Heart right ventricle (tissue), 16 donors: ENCODE measurements at regions of chr15 and their contacts with region 1.

Region 1: GRCh38 chr15:58331903-58332675 is 99.7 kb upstream of the LIPC start:
- DNase-seq: peak; percentile 90 to 96
- ATAC-seq: peak; percentile 96 to 98 (median 98)
- H3K4me3 ChIP-seq: peak overlapping the region in 3 of 10 donors; percentile 1 to 8 (median 1)
- H3K27ac ChIP-seq: peak overlapping the region; percentile 79 to 95 (median 88)
- H3K4me1 ChIP-seq: peaks cover 18 to 47% (median 38%) of the 10 kb centered on the region in 9 donors
- H3K27me3 ChIP-seq: no peaks in the 10 kb centered on the region
- CTCF ChIP-seq: no peak

Region 2: DNA sequence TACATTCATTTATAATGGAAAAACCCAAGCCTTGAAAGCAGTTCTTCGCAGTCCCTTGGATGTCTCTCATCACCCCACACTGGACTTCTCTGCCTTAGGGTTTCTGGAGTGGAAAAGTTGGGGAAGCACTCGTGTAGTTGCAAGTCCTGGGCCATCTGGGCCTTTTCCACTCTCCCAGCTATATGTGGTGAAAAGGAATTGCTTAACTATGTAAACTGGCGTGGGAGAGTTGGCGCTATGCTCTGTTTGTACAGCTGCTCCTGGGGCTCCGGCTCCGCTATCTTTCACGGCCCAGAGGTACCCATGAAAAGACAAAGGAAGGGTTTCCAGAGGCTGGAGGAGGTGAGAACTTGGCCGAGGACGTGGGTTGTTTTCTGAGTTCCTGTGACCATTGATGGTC is 821.4 kb before region 1 on chr15:
- intact Hi-C with region 1: no loop called
- DNase-seq: peak; percentile 48 to 76
- ATAC-seq: peak; percentile 63 to 89 (median 76)
- H3K4me3 ChIP-seq: no peak overlapping the region
- H3K27ac ChIP-seq: peak overlapping the region in 6 of 10 donors; percentile 50 to 74 (median 60)
- H3K4me1 ChIP-seq: peaks cover 2 to 55% (median 31%) of the 10 kb centered on the region in 9 donors
- H3K27me3 ChIP-seq: no peaks in the 10 kb centered on the region
- CTCF ChIP-seq: no peak

Region 3: DNA sequence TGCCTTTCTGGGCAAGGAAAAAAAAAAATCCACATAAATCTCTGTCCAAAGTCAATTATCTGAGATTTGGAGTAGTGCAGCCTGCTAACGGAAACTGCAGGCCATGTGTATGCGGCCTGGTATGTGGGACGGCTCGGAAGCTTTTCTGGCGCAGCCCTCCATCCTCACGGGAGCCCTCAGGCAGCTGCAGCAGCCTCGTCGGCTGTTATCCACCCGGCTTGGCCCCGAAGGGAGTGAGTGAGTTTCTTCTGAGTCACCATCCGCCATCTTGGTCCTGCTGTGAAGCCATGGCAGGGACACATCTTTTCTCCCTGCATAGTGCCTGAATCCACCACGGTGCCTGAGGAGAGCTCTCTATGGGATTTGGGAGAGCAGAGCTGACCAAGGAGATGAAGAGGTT is 562.8 kb before region 1 on chr15:
- intact Hi-C with region 1: no loop called
- DNase-seq: peak; percentile 76 to 79
- ATAC-seq: peak; percentile 87 to 99 (median 96)
- H3K4me3 ChIP-seq: no peak overlapping the region
- H3K27ac ChIP-seq: peak overlapping the region in 8 of 10 donors; percentile 17 to 65 (median 40)
- H3K4me1 ChIP-seq: peaks cover 0 to 12% (median 0%) of the 10 kb centered on the region in 9 donors
- H3K27me3 ChIP-seq: no peaks in the 10 kb centered on the region
- CTCF ChIP-seq: no peak

Region 4: DNA sequence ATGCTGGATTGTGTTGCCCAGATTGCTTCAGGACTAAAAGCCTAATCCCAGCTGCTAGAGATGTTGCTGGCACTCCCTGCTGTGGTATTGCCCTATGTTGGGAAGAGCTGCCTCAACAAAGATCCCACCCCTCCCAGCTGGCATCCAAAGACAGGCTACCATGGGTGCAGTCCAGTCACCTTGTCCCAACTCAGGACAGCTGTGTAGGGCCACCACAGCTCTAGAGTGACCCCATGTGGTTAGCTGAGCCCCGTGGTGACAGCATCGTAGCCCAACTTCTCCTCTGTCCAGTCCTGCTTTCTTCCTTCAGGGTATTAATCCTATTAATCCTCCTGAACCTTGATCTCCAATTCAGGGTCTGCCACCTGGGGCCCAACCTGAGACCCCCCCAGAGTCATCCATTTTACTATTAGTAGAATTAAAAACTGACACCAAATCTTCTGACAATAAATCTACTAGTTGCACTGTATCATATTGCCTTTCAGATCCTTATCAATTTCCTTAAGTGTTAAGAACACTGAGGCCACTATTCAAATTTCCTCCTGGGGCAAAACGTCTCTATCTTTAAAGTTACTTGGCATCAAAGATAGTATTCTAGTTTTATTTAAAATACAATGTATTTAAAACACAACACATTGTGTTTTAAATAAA is 110.4 kb before region 1 on chr15:
- intact Hi-C with region 1: no loop called
- DNase-seq: no peak
- ATAC-seq: peak in 4 of 8 donors; percentile 54 to 68 (median 58)
- H3K4me3 ChIP-seq: no peak overlapping the region
- H3K27ac ChIP-seq: no peak overlapping the region
- H3K4me1 ChIP-seq: peaks cover 0 to 20% (median 14%) of the 10 kb centered on the region in 9 donors
- H3K27me3 ChIP-seq: no peaks in the 10 kb centered on the region
- CTCF ChIP-seq: peak in 6 of 9 donors; percentile 7 to 58 (median 42)

Region 5: DNA sequence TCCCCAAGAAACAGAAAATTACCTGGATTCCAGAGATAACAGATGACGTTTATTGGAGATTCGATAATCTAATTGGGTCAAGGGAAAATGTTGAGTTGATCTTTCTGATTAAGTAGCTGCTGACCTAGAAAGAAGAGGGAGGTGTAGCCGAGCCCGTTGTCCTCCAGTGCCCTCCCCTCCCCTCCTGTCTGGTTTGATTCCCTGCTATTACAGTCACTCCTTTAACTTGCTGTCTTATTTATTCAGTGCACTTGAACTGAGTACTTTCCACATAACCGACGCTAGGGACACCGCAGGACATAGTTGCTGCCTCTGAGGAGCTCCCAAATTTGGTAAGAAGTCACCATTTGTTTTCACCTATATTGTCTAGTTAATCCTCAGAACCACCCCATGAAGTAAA is 90.2 kb before region 1 on chr15:
- intact Hi-C with region 1: no loop called
- DNase-seq: no peak
- ATAC-seq: peak in 6 of 8 donors; percentile 39 to 78 (median 58)
- H3K4me3 ChIP-seq: no peak overlapping the region
- H3K27ac ChIP-seq: peak overlapping the region in 2 of 10 donors; percentile 4 to 22
- H3K4me1 ChIP-seq: peaks cover 0 to 32% (median 9%) of the 10 kb centered on the region in 9 donors
- H3K27me3 ChIP-seq: no peaks in the 10 kb centered on the region
- CTCF ChIP-seq: peak in 3 of 9 donors; percentile 11 to 33 (median 31)

Region 6: DNA sequence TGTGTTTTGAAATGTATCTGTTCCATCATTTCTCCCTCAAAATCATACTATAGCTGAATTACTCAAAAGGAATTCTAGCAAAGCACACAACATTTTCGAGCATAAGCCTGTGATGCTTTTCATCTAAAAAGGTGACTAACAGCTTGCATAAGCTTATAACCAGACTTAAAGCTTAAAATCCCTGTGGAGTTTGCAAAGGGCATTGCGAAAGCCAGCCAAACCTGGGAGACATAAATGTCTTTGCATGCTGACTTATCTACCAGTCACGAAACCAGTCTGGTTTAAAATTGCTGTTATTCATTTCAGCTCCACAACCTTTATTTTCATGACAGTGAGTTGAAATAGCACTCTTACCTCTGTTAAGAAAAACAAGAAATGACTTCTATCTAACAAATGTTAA is 64.1 kb after region 1 on chr15:
- intact Hi-C with region 1: loop called in 1 of 10 experiments (anchors 10 kb)
- DNase-seq: no peak
- ATAC-seq: no peak
- H3K4me3 ChIP-seq: no peak overlapping the region
- H3K27ac ChIP-seq: no peak overlapping the region
- H3K4me1 ChIP-seq: no peaks in the 10 kb centered on the region
- H3K27me3 ChIP-seq: no peaks in the 10 kb centered on the region
- CTCF ChIP-seq: no peak

Region 7: DNA sequence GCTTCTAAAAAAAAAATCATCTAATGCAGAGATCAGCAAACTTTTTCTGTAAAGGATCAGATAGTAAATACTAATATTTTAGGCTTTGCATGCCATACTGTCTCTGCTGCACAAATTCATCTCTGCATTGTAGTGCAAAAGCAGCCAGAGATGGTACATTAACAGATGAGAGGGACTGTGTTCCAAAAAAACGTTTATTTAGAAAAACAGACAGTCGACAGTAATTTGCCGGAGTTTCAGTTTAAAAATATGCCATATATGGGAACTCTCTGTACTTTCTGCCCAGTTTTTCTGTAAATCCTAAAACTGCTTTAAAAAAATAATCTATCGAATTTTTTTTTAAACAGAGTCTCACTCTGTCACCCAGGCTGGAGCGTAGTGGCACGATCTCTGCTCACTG is 453.3 kb after region 1 on chr15:
- intact Hi-C with region 1: loop called in 1 of 10 experiments (anchors 5 kb)
- DNase-seq: no peak
- ATAC-seq: no peak
- H3K4me3 ChIP-seq: no peak overlapping the region
- H3K27ac ChIP-seq: peak overlapping the region in 2 of 10 donors; percentile 33
- H3K4me1 ChIP-seq: peaks cover 0 to 45% (median 26%) of the 10 kb centered on the region in 9 donors
- H3K27me3 ChIP-seq: no peaks in the 10 kb centered on the region
- CTCF ChIP-seq: no peak

Region 8: GRCh38 chr15:58933281-58934113 is 601.4 kb after region 1 on chr15 and contains the start of gene SLTM:
- intact Hi-C with region 1: loop called in 1 of 10 experiments (anchors 10 kb)
- DNase-seq: peak; percentile 92 to 95
- ATAC-seq: peak; percentile 97 to 99 (median 98)
- H3K4me3 ChIP-seq: peak within 1 kb of the TSS; percentile 68 to 92 (median 82)
- H3K27ac ChIP-seq: peak within 1 kb of the TSS; percentile 86 to 100 (median 99)
- H3K4me1 ChIP-seq: peaks cover 3 to 41% (median 32%) of the 10 kb centered on the region in 9 donors
- H3K27me3 ChIP-seq: no peaks in the 10 kb centered on the region
- CTCF ChIP-seq: peak in 4 of 9 donors; percentile 27 to 50 (median 30)
- total RNA-seq, gene SLTM: 37.8 to 65.0 (median 44.4) TPM